Endothelial cell of umbilical vein (primary cell): ENCODE measurements at regions of chr6 and their contacts with region 1.

Region 1: DNA sequence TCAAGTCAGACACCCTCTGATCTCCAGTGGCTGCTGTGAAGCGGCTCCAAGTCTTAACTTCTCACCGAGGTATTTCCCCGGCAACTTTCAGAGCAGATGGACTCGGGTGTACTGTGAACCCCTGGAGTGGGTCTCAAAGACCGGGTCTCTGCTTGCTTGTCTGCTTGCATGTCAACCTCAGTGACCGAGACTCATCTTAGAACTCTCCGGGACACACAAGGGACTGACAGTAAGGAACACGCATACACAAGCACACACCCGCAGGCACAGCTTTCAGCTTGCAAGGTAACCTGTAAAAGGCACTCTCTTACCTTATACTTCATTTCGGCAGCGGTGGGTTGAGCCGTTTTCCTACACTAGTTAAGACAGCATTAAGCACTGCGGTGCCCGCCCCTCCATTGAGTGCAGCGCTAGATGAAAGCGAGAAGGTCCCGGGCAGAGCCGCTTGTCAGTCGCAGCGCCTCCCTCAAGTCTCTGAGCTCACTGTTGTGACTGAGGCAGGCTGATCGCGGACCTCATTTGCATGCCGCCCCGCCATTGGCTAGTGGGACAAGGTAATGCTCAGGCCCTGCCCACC is at the start of gene NEDD9:
- DNase-seq: peak; percentile 98
- H3K4me3 ChIP-seq: peak within 1 kb of the TSS; percentile 69 to 93 (median 70)
- H3K27ac ChIP-seq: peak within 1 kb of the TSS; percentile 93
- H3K4me1 ChIP-seq: peaks cover 36% of the 10 kb centered on the region
- H3K27me3 ChIP-seq: no peaks in the 10 kb centered on the region
- CTCF ChIP-seq: no peak
- POLR2A ChIP-seq: peak; percentile 98
- total RNA-seq, gene NEDD9: 55.2 and 73.0 TPM in 2 replicates

Region 2: DNA sequence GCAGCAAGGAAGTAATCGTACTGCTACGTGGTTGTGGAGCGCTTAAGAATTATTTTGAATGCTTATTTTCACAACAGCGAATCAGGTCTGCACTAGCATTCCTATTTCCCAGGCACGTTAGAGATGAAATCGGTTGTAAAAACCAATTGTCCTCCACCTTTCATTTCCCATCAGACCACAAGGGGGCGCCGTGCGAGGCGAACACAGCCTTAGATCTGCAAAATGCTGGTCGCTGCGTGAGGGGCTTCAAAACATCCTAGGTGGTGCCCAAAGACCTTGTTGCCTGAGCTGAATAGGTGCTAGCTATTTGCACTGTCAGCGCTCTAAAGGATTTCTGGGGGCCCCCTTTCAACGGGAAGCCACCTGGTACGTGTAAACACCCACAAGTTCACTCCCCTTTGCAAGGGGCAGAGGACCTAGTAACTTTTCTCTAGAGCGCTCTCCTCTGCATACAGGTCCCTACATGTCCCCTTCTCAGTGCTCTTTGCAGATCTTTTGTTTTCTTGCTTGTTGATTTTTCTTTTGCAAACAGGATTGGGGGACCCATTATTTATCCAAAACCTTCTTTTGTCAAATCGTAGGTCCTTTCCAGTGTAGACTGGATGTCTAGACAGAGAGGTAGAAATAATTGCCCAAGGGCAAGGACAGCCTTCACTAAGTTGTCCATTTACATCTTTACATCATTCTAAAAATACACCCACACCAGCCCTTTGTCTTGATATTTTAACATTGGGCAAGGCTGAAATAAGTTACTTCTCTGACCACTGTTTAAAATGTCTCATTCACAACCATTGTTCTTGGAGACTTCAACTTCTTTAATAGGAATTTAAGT is 59.6 kb before region 1 on chr6:
- CTCF ChIA-PET with region 1: interaction called, 45 read pairs
- POLR2A ChIA-PET with region 1: no interaction called
- dilution Hi-C with region 1: no loop called
- intact Hi-C with region 1: loop called (anchors 1 kb)
- DNase-seq: peak; percentile 71
- H3K4me3 ChIP-seq: no peak overlapping the region
- H3K27ac ChIP-seq: no peak overlapping the region
- H3K4me1 ChIP-seq: no peaks in the 10 kb centered on the region
- H3K27me3 ChIP-seq: no peaks in the 10 kb centered on the region
- CTCF ChIP-seq: peak; percentile 78 to 82
- POLR2A ChIP-seq: no peak

Region 3: DNA sequence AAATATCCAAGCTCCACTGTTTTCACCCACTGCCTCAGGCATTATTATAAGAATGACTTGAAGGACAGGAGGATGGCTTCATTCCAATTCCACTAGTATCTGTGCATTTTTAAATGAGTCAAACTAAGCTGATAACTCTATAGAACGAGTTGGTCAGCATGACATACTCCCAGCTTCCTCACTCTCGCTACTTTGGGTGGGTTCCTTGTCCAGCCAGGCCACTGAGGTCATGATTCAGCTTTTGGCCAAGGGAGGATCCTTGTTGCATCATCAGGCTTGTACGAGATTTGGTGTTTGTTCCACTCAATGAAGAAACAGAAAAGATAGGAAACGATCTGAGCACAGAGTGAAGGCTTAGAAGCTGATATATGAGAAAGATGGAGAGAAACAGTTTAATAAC is 19.7 kb before region 1 on chr6:
- CTCF ChIA-PET with region 1: interaction called, 7 read pairs
- POLR2A ChIA-PET with region 1: interaction called, 19 read pairs
- dilution Hi-C with region 1: no loop called
- intact Hi-C with region 1: loop called (anchors 1 kb)
- DNase-seq: peak; percentile 71
- H3K4me3 ChIP-seq: no peak overlapping the region
- H3K27ac ChIP-seq: peak overlapping the region; percentile 77
- H3K4me1 ChIP-seq: peaks cover 95% of the 10 kb centered on the region
- H3K27me3 ChIP-seq: no peaks in the 10 kb centered on the region
- CTCF ChIP-seq: no peak
- POLR2A ChIP-seq: no peak

Region 4: GRCh38 chr6:11277275-11278206 is 45.3 kb after region 1 on chr6:
- CTCF ChIA-PET with region 1: no interaction called
- POLR2A ChIA-PET with region 1: interaction called, 4 read pairs
- dilution Hi-C with region 1: no loop called
- intact Hi-C with region 1: loop called (anchors 1 kb)
- DNase-seq: peak; percentile 71
- H3K4me3 ChIP-seq: no peak overlapping the region
- H3K27ac ChIP-seq: peak overlapping the region; percentile 51
- H3K4me1 ChIP-seq: peaks cover 12% of the 10 kb centered on the region
- H3K27me3 ChIP-seq: no peaks in the 10 kb centered on the region
- CTCF ChIP-seq: no peak
- POLR2A ChIP-seq: no peak

Region 5: GRCh38 chr6:11414176-11414963 is 182.1 kb after region 1 on chr6:
- CTCF ChIA-PET with region 1: no interaction called
- POLR2A ChIA-PET with region 1: interaction called, 3 read pairs
- dilution Hi-C with region 1: no loop called
- intact Hi-C with region 1: loop called (anchors 5 kb)
- DNase-seq: peak; percentile 43
- H3K4me3 ChIP-seq: no peak overlapping the region
- H3K27ac ChIP-seq: no peak overlapping the region
- H3K4me1 ChIP-seq: peaks cover 35% of the 10 kb centered on the region
- H3K27me3 ChIP-seq: no peaks in the 10 kb centered on the region
- CTCF ChIP-seq: no peak
- POLR2A ChIP-seq: no peak